AG04450 (cell line): ENCODE measurements at regions of chr2 and their contacts with region 1.

Region 1: DNA sequence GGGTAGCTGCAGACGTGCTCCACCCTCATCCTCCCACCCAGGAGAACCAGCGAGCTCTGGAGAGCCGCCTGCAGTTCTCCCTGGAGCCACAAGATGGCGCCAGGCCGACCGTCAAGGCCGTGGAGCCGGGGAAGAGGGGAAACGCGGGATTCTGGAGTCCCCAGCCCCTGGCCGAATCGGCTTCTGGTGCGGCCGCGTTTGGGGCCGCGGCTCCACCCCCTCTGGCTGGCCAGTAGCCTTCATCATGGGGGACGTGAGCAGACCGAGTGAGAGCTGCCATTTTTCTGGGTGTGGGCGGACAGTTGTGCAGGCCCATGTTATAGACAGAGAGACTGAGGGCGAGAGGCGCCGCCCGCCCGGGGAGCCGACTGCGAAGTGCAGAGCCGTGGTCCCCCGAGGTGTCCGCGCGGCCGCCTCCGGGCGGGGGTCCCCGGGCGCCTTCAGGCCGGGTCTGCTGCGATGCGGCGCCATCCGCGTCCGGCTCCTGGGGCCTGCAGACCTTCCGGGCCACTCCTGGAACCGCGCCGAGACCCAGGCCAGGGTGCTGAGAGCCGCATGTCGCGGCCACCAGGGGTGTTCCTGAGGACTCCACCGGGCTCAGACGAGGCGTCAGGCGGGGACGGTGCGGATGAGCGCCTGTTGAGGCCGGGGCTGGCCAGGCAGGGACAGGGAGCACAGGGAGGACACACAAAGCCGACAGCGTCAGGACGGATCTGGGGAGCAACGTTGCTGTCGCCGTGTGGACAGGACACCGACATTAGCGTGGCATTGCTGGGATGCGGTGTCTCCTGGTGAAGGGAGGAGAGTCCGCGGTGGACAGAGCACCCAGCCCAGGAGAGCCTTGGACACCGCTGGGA is 418.2 kb upstream of the HS6ST1 start:
- DNase-seq: peak; percentile 32
- H3K4me3 ChIP-seq: peak overlapping the region; percentile 45
- H3K27ac ChIP-seq: no peak overlapping the region
- H3K27me3 ChIP-seq: peaks cover 20% of the 10 kb centered on the region
- CTCF ChIP-seq: peak; percentile 98

Region 2: DNA sequence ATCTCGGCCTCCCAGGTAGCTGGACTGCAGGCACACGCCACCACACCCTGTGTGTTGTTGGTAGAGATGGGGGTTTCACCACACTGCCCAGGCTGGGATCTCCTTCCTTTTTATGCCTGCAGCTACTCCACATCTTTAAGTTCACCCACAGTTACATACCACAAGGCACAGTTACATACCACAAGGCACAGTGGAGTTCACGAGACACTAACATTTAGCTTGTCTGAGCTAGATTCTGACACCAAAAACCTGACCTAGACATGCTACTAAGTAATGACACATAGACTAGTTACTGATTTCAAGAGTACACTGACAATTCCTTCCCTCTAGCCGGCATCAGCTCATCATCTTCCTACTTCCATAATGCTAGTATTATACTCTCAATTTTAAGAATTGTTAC is 883.2 kb before region 1 on chr2:
- CTCF ChIA-PET with region 1: no interaction called
- POLR2A ChIA-PET with region 1: no interaction called
- DNase-seq: no peak
- H3K4me3 ChIP-seq: no peak overlapping the region
- H3K27ac ChIP-seq: no peak overlapping the region
- H3K27me3 ChIP-seq: no peaks in the 10 kb centered on the region
- CTCF ChIP-seq: no peak

Region 3: GRCh38 chr2:128159437-128159836 is 577.5 kb before region 1 on chr2:
- CTCF ChIA-PET with region 1: interaction called, 13 read pairs
- POLR2A ChIA-PET with region 1: no interaction called
- DNase-seq: no peak
- H3K4me3 ChIP-seq: no peak overlapping the region
- H3K27ac ChIP-seq: no peak overlapping the region
- H3K27me3 ChIP-seq: no peaks in the 10 kb centered on the region
- CTCF ChIP-seq: no peak

Region 4: DNA sequence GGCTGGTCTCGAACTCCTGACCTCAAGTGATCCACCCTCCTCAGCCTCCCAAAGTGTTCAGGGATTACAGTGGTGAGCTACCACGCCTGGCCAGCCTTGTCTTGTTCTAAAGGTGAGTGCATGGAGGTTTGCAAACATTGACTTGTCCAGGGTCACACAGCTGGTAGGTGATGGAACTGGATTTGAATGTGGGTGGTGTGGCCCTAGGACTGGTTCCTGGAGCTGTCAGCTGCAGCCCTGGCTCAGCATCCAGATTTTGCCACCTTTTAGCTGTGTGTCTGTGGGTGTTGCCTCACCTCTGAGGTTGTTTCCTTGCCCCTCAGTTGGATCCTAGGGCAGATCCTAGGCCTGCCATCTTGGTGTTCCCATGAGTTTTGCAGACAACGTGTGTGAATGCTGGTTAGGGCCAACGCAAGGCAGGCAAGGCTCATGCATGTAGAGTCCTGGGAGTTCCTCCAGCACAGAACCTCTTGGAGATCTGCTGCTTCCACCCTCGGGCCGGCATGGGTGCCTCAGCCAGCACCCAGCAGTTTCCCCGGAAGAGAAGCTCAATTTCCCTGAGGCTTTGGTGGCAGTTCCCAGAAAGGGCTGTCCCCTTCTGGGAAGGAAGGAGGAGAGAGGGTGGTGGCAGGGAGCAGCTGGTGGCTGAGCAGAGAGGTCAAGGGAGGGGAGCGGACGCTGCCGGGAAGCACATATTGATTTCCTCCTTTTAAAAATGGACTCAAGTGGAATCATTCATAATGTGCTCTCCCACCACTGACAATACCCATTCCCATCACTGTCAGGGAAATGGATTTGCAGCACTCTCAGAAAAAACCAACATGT is 290.7 kb before region 1 on chr2:
- CTCF ChIA-PET with region 1: interaction called, 10 read pairs
- POLR2A ChIA-PET with region 1: no interaction called
- DNase-seq: no peak
- H3K4me3 ChIP-seq: no peak overlapping the region
- H3K27ac ChIP-seq: no peak overlapping the region
- H3K27me3 ChIP-seq: no peaks in the 10 kb centered on the region
- CTCF ChIP-seq: no peak

Region 5: DNA sequence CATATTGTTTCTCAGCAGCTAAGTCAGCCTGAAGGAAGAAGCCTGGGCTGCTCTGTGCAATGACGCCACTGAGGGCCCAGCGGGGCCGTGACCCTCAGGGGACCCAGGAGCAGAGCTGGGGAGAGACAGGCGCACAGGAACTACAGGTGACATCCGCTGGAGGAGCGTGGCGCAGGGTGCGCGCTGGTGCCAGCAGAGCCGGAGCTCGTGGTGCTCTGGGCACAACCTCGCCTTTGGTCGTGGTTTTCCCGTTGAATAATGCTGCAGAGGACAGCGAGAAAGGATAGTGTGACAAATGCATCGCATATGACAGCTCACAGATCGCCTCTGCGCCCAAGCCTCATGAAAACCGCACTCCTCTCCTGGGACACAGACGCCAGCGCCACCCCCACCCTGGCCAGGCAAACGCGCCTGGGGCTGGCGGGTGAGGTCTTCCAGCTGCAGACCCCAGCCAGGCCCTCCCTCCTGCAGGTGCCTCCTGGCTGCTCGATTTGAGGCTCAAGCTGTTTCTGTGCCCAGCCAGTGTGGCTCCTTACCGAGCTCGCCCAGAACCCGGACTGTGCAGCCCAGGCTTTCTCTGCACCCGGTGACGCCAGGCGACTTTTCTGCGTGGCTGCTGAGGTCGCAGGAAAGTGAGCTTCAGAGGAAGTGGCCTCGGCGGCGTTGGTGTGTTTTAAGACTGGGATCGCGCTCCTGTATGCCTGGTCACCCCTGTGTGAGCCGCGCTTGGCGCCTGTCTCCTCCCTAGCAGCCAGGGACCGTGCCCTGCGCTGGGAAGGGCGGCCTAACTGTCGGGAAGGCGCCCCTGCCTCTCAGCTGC is 164.9 kb after region 1 on chr2:
- CTCF ChIA-PET with region 1: no interaction called
- POLR2A ChIA-PET with region 1: no interaction called
- DNase-seq: no peak
- H3K4me3 ChIP-seq: no peak overlapping the region
- H3K27ac ChIP-seq: no peak overlapping the region
- H3K27me3 ChIP-seq: no peaks in the 10 kb centered on the region
- CTCF ChIP-seq: no peak